ENCODE measurements at regions of chr17 and their contacts with region 1.

Region 1: GRCh38 chr17:67824735-67825626 is at the start of gene BPTF:
- DNase-seq: peak; percentile 95
- ATAC-seq: peak; percentile 88
- H3K4me3 Mint-ChIP-seq: peak within 1 kb of the TSS; percentile 99
- H3K27ac Mint-ChIP-seq: peak within 1 kb of the TSS; percentile 98
- H3K4me1 Mint-ChIP-seq: peaks cover 26% of the 10 kb centered on the region
- H3K27me3 Mint-ChIP-seq: peaks cover 5% of the 10 kb centered on the region
- total RNA-seq, gene BPTF: 77.6 to 109 TPM

Region 2: DNA sequence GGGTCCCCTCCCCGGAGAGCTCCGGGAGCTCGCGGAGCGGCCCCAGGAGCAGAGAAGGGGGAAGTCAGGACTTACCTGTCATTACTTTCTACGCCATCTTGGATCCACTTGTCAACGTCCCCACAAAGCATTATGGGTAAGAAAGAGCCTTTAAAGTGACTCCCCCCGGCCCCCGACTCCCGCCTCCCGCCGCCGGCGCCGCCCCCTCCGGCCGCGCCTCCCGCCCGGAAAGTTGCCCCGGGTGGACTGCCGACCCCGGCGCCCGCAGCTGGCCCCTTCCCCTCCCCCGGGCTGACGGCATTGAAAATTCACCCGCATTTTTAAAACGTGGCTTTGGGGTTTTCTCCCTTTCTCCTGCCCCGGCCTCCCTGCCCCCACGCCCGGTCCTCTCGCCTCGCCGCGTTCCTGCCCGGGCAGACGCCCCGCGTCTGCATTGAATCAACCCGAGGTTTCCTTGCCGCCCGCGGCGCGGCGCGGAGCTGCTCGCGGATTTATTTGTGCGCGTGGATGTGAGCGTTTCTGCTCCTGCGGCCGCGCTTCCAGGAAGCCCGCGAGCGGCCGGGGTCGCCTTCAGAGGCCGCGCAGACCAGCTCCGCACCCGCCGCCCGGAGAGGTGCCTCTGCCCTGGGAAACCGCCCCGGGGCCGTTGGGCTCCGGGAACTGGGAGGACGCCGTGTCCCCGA is 579.8 kb before region 1 on chr17 and contains the start of gene HELZ:
- CTCF ChIA-PET with region 1: no interaction called
- POLR2A ChIA-PET with region 1: no interaction called
- intact Hi-C with region 1: loop called in 1 of 2 experiments (anchors 1 kb)
- DNase-seq: peak; percentile 79
- ATAC-seq: peak; percentile 71
- H3K4me3 Mint-ChIP-seq: peak within 1 kb of the TSS; percentile 94
- H3K27ac Mint-ChIP-seq: peak within 1 kb of the TSS; percentile 85
- H3K4me1 Mint-ChIP-seq: peaks cover 40% of the 10 kb centered on the region
- H3K27me3 Mint-ChIP-seq: peaks cover 2% of the 10 kb centered on the region
- total RNA-seq, gene HELZ: 55.3 to 58.0 TPM

Region 3: GRCh38 chr17:67717624-67718329 is 107.2 kb before region 1 on chr17 and contains the start of gene NOL11:
- CTCF ChIA-PET with region 1: interaction called, 3 read pairs
- POLR2A ChIA-PET with region 1: no interaction called
- intact Hi-C with region 1: loop called (anchors 1 to 5 kb)
- DNase-seq: peak; percentile 100
- ATAC-seq: peak; percentile 96
- H3K4me3 Mint-ChIP-seq: peak within 1 kb of the TSS; percentile 88
- H3K27ac Mint-ChIP-seq: peak within 1 kb of the TSS; percentile 98
- H3K4me1 Mint-ChIP-seq: peaks cover 19% of the 10 kb centered on the region
- H3K27me3 Mint-ChIP-seq: no peaks in the 10 kb centered on the region
- total RNA-seq, gene NOL11: 79.3 to 79.7 TPM

Region 4: GRCh38 chr17:67733371-67733940 is 91.5 kb before region 1 on chr17:
- CTCF ChIA-PET with region 1: no interaction called
- POLR2A ChIA-PET with region 1: no interaction called
- intact Hi-C with region 1: no loop called
- DNase-seq: no peak
- ATAC-seq: no peak
- H3K4me3 Mint-ChIP-seq: no peak overlapping the region
- H3K27ac Mint-ChIP-seq: peak overlapping the region; percentile 40
- H3K4me1 Mint-ChIP-seq: peaks cover 19% of the 10 kb centered on the region
- H3K27me3 Mint-ChIP-seq: no peaks in the 10 kb centered on the region

Region 5: DNA sequence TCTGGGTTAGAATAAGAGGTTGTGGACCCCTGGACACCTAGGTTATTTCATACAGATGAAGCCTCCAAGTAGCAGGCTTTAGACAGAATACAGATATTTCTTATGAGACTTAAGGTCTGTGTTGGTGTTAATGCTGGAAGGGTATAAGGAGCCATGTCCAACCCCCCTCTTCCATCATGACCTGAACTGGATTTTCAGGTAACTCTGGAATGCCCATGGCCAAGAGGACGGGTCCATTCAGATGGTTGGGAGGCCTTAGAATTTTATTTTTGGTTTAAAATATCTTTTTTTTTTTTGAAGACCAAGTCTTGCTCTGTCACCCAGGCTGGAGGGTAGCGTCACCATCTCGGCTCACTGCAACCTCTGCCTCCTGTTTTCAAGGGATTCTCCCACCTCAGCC is 49.5 kb before region 1 on chr17:
- CTCF ChIA-PET with region 1: no interaction called
- POLR2A ChIA-PET with region 1: no interaction called
- intact Hi-C with region 1: no loop called
- DNase-seq: no peak
- ATAC-seq: no peak
- H3K4me3 Mint-ChIP-seq: no peak overlapping the region
- H3K27ac Mint-ChIP-seq: no peak overlapping the region
- H3K4me1 Mint-ChIP-seq: no peaks in the 10 kb centered on the region
- H3K27me3 Mint-ChIP-seq: no peaks in the 10 kb centered on the region

Region 6: DNA sequence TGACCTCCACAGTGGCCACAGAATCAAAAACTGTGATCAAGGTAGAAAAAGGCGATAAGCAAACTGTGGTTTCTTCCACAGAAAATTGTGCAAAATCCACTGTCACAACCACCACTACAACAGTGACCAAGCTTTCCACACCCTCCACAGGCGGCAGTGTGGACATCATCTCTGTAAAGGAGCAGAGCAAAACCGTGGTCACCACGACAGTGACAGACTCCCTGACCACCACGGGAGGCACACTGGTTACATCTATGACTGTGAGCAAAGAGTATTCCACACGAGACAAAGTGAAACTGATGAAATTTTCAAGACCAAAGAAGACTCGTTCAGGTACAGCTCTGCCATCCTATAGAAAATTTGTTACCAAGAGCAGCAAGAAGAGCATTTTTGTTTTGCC is 87.7 kb after region 1 on chr17:
- CTCF ChIA-PET with region 1: no interaction called
- POLR2A ChIA-PET with region 1: no interaction called
- intact Hi-C with region 1: loop called in 1 of 2 experiments (anchors 1 kb)
- DNase-seq: peak; percentile 33
- ATAC-seq: peak; percentile 21
- H3K4me3 Mint-ChIP-seq: no peak overlapping the region
- H3K27ac Mint-ChIP-seq: no peak overlapping the region
- H3K4me1 Mint-ChIP-seq: peaks cover 28% of the 10 kb centered on the region
- H3K27me3 Mint-ChIP-seq: no peaks in the 10 kb centered on the region

Region 7: DNA sequence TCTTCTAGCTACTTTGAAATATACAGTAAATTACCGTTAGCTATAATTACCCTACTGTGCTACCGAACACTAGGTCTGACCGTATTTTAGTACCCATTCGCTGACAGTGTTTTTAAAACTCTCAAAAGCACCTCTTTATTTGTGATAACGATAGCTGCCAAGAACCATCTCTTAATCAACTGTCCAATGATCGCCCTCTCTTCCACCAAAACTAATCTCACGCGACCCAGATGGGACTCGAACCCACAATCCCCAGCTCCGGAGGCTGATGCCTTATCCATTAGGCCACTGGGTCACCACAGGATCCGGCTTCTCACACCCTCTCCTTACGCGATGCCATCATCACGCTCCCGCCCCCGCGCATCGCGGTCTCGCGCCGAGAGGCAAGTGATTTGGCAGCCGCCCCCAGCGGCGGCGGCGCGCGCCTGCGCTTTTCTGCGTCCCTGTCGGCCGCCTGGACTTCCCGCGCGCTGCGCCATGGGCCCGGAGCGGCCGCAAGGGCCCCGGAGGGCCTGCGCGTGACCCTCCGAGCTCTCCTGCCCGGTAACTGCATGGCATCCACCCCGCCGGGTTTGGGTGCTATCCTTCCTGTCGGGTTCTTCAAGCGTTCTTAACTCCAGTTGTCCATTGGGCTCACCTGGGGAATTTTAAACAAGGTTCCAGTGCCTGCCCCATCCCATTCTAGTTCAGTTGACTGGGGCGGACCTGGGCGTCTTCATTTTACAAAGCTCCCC is 194.9 kb after region 1 on chr17:
- CTCF ChIA-PET with region 1: no interaction called
- POLR2A ChIA-PET with region 1: no interaction called
- intact Hi-C with region 1: loop called in 1 of 2 experiments (anchors 1 kb)
- DNase-seq: peak; percentile 98
- ATAC-seq: peak; percentile 93
- H3K4me3 Mint-ChIP-seq: peak overlapping the region; percentile 78
- H3K27ac Mint-ChIP-seq: peak overlapping the region; percentile 93
- H3K4me1 Mint-ChIP-seq: peaks cover 8% of the 10 kb centered on the region
- H3K27me3 Mint-ChIP-seq: no peaks in the 10 kb centered on the region

Region 8: GRCh38 chr17:68247445-68248198 is 422.6 kb after region 1 on chr17 and contains the start of gene AMZ2:
- CTCF ChIA-PET with region 1: no interaction called
- POLR2A ChIA-PET with region 1: no interaction called
- intact Hi-C with region 1: loop called in 1 of 2 experiments (anchors 1 kb)
- DNase-seq: peak; percentile 98
- ATAC-seq: peak; percentile 84
- H3K4me3 Mint-ChIP-seq: peak within 1 kb of the TSS; percentile 88
- H3K27ac Mint-ChIP-seq: peak within 1 kb of the TSS; percentile 99
- H3K4me1 Mint-ChIP-seq: peaks cover 37% of the 10 kb centered on the region
- H3K27me3 Mint-ChIP-seq: no peaks in the 10 kb centered on the region
- total RNA-seq, gene AMZ2: 119 to 150 TPM

Measured in activated CD4-positive, alpha-beta T cell treated with anti-CD3 and anti-CD28 coated beads for 36 hours (primary cell).